Esophagus muscularis mucosa (tissue), 4 donors: ENCODE measurements at regions of chr11 and their contacts with region 1.

Region 1: DNA sequence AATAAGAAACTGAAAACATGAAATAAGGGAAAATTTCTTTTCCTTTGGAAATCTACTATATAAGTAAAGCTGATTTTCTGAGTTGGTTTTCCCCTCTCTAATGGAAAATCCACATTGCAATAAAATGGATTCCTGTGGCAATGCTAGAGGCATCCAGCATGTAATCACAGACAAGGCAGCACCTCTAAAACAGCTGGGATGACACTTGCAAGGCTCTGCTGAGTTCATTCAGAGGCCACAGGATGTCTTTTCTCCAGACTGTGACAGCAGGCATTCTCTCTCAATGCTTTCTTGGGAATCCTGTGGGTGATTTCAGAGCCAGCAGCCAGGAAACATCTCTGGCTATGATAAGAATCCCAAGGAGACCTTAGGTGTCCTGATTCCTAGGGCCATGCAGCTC is 201.3 kb upstream of the BLID start:
- DNase-seq: no peak
- H3K4me3 ChIP-seq: no peak overlapping the region
- H3K27ac ChIP-seq: peak overlapping the region in 1 of 4 donors; percentile 37
- H3K4me1 ChIP-seq: peaks cover 0 to 43% (median 37%) of the 10 kb centered on the region in 4 donors
- H3K27me3 ChIP-seq: no peaks in the 10 kb centered on the region
- CTCF ChIP-seq: no peak
- EP300 ChIP-seq: no peak
- POLR2A ChIP-seq: no peak

Region 2: DNA sequence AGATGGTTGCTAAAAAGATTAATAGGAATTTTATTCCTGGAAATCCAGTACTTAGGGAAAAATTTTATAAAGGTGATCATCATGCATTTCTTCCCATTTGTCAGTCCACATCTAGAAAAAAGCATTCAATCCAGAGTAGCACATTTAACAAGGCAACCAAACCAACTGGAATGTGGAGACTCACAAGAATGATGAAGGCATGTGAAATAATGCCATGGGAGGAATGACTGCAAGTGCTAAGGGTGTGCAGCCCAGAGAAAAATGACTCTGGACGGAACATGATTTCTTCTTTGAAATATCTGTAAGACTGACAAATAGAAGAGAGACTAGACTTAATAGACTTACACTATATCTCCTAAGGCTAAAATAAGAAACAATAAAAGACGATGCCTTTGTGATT is 235.1 kb before region 1 on chr11:
- intact Hi-C with region 1: no loop called
- DNase-seq: no peak
- H3K4me3 ChIP-seq: no peak overlapping the region
- H3K27ac ChIP-seq: peak overlapping the region in 1 of 4 donors; percentile 17
- H3K4me1 ChIP-seq: peaks cover 6 to 31% (median 16%) of the 10 kb centered on the region in 4 donors
- H3K27me3 ChIP-seq: no peaks in the 10 kb centered on the region
- CTCF ChIP-seq: no peak
- EP300 ChIP-seq: no peak
- POLR2A ChIP-seq: no peak

Region 3: GRCh38 chr11:122126024-122126688 is 191.1 kb before region 1 on chr11:
- intact Hi-C with region 1: no loop called
- DNase-seq: no peak
- H3K4me3 ChIP-seq: no peak overlapping the region
- H3K27ac ChIP-seq: no peak overlapping the region
- H3K4me1 ChIP-seq: no peaks in the 10 kb centered on the region
- H3K27me3 ChIP-seq: no peaks in the 10 kb centered on the region
- CTCF ChIP-seq: no peak
- EP300 ChIP-seq: no peak
- POLR2A ChIP-seq: no peak

Region 4: DNA sequence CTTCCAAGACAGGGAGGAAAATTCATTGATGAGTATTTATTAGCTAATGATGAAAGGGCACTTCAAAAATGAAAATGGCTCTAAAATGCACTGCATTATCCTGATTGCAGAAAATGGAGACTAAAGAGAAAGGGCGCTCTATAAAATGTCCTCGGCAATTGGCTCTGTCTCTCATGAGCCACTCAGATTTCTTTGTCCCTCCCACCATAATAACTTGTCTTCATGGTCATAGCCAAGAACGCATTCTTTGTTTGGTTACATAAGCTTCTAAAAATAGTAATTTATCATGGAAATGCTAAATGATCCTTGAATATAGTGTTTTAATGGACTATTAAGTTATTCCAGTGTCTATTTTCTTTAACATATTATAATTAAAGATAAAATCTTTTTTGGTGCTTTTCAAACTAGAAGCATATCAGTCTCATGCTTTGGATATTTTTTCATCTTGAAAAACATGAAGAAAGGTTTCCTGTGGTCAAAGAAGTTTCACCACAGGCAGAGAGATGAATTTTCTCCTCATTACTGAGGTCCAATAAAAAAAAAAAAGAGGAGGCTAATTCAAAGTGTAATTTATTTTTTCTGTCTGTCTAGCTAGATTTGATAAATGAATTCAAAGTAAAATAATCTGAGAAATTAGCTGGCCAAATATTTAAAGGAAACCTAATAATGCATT is 36.9 kb after region 1 on chr11:
- intact Hi-C with region 1: no loop called
- DNase-seq: no peak
- H3K4me3 ChIP-seq: no peak overlapping the region
- H3K27ac ChIP-seq: no peak overlapping the region
- H3K4me1 ChIP-seq: peaks cover 0 to 16% (median 11%) of the 10 kb centered on the region in 4 donors
- H3K27me3 ChIP-seq: no peaks in the 10 kb centered on the region
- CTCF ChIP-seq: no peak
- EP300 ChIP-seq: no peak
- POLR2A ChIP-seq: no peak

Region 5: GRCh38 chr11:122367809-122368231 is 50.5 kb after region 1 on chr11:
- intact Hi-C with region 1: loop called (anchors 2 kb)
- DNase-seq: no peak
- H3K4me3 ChIP-seq: peak overlapping the region in 2 of 4 donors; percentile 7 to 12
- H3K27ac ChIP-seq: peak overlapping the region; percentile 16 to 59 (median 54)
- H3K4me1 ChIP-seq: peaks cover 13 to 28% (median 18%) of the 10 kb centered on the region in 4 donors
- H3K27me3 ChIP-seq: no peaks in the 10 kb centered on the region
- CTCF ChIP-seq: no peak
- EP300 ChIP-seq: no peak
- POLR2A ChIP-seq: no peak